ENCODE measurements at regions of chr11 and their contacts with region 1.

Region 1: GRCh38 chr11:67082035-67082791 is 25.6 kb downstream of the RHOD start:
- DNase-seq: peak in 3 of 9 donors; percentile 5 to 13 (median 11)
- ATAC-seq: no peak
- H3K4me3 ChIP-seq: no peak overlapping the region
- H3K4me3 Mint-ChIP-seq: peak overlapping the region; percentile 12 to 70 (median 60)
- H3K27ac ChIP-seq: no peak overlapping the region
- H3K27ac Mint-ChIP-seq: peak overlapping the region in 3 of 9 donors; percentile 15 to 72 (median 17)
- H3K4me1 ChIP-seq: peaks cover 7 to 10% of the 10 kb centered on the region in 2 donors
- H3K4me1 Mint-ChIP-seq: peaks cover 5 to 22% (median 15%) of the 10 kb centered on the region in 7 donors
- H3K27me3 ChIP-seq: no peaks in the 10 kb centered on the region
- H3K27me3 Mint-ChIP-seq: peaks cover 0 to 5% (median 0%) of the 10 kb centered on the region in 5 donors

Region 2: DNA sequence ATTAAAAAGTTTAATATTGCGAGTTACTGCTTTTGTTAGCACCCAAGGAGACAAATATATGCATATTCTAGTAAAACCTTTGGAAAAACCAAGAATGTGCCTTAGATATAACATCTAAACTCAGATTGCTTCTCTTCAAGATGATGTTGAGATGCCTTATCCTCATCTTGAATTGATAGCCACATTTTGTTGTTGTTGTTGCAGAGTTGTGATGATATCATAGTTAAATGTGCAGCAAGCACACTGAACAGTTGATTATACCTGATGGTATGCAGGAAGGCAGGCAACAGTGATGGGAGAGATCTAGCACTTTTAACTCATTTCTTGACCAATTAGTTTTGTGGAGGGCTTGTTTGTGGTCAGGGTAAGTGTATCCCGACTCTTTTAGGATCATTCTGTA is 84.9 kb after region 1 on chr11:
- CTCF ChIA-PET with region 1: interaction called, 20 read pairs
- POLR2A ChIA-PET with region 1: interaction called, 3 read pairs
- intact Hi-C with region 1: loop called (anchors 1 kb)
- DNase-seq: no peak
- ATAC-seq: no peak
- H3K4me3 ChIP-seq: no peak overlapping the region
- H3K4me3 Mint-ChIP-seq: no peak overlapping the region
- H3K27ac ChIP-seq: peak overlapping the region; percentile 25
- H3K27ac Mint-ChIP-seq: peak overlapping the region in 4 of 9 donors; percentile 12 to 63 (median 32)
- H3K4me1 ChIP-seq: peaks cover 0 to 3% of the 10 kb centered on the region in 2 donors
- H3K4me1 Mint-ChIP-seq: peaks cover 20 to 66% (median 54%) of the 10 kb centered on the region in 7 donors
- H3K27me3 ChIP-seq: no peaks in the 10 kb centered on the region
- H3K27me3 Mint-ChIP-seq: no peaks in the 10 kb centered on the region